Calu3 (cell line): ENCODE measurements at regions of chr6 and their contacts with region 1.

Region 1: DNA sequence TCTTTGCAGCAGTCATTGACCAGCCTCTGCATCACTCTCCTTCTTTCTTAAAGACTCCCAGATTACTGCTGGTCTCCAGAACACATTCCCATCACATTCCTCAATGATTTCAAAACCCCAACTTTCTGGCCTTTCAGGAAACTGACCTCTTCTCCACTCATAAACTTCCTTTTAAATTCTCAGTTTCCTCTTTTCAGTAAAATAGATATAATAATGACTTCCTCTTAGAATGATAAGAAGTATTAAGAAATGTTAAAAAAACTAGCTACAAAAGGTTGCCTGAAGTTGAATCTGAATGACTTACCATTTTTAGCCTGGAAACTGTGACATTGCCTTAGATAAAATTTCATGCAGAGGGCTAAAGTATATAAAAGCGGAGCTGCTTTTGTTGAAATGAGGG is 239.3 kb downstream of the OGFRL1 start:
- DNase-seq: no peak
- H3K4me3 Mint-ChIP-seq: no peak overlapping the region
- H3K27ac Mint-ChIP-seq: no peak overlapping the region
- H3K4me1 Mint-ChIP-seq: peaks cover 42% of the 10 kb centered on the region
- H3K27me3 Mint-ChIP-seq: no peaks in the 10 kb centered on the region
- CTCF ChIP-seq: no peak

Region 2: GRCh38 chr6:71277926-71278600 is 249.8 kb before region 1 on chr6:
- CTCF ChIA-PET with region 1: no interaction called
- intact Hi-C with region 1: no loop called
- DNase-seq: no peak
- H3K4me3 Mint-ChIP-seq: no peak overlapping the region
- H3K27ac Mint-ChIP-seq: no peak overlapping the region
- H3K4me1 Mint-ChIP-seq: no peaks in the 10 kb centered on the region
- H3K27me3 Mint-ChIP-seq: no peaks in the 10 kb centered on the region
- CTCF ChIP-seq: no peak

Region 3: GRCh38 chr6:71567562-71567961 is 39.7 kb after region 1 on chr6:
- CTCF ChIA-PET with region 1: no interaction called
- intact Hi-C with region 1: no loop called
- DNase-seq: no peak
- H3K4me3 Mint-ChIP-seq: no peak overlapping the region
- H3K27ac Mint-ChIP-seq: no peak overlapping the region
- H3K4me1 Mint-ChIP-seq: no peaks in the 10 kb centered on the region
- H3K27me3 Mint-ChIP-seq: no peaks in the 10 kb centered on the region
- CTCF ChIP-seq: no peak

Region 4: DNA sequence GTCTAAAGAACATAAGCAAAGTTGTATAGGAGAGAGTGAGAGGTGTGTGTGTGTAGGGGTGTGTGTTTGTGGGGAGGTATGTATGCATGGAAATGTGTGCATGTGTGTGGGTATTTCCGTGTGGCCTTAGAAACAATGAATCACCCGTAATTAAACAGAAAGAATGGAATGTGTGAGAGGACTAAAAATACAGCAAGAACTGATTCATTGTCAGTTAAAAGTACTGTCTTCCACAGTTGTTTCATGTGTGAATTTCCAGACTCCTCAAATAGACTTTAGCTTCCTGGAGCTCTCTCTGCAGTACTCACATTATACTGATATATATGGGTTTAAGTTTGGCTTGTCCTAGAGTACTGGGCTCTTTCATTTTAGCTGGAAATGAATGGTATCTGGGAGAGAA is 504.2 kb after region 1 on chr6:
- CTCF ChIA-PET with region 1: interaction called, 3 read pairs
- intact Hi-C with region 1: loop called (anchors 5 kb)
- DNase-seq: peak; percentile 9
- H3K4me3 Mint-ChIP-seq: peak overlapping the region; percentile 4
- H3K27ac Mint-ChIP-seq: peak overlapping the region; percentile 6
- H3K4me1 Mint-ChIP-seq: peaks cover 38% of the 10 kb centered on the region
- H3K27me3 Mint-ChIP-seq: no peaks in the 10 kb centered on the region
- CTCF ChIP-seq: no peak